Astrocyte of the cerebellum (primary cell): ENCODE measurements at regions of chr1 and their contacts with region 1.

Region 1: GRCh38 chr1:50295566-50295965 is 127.7 kb downstream of the DMRTA2 start:
- DNase-seq: no peak
- H3K4me3 ChIP-seq: no peak overlapping the region
- CTCF ChIP-seq: no peak

Region 2: DNA sequence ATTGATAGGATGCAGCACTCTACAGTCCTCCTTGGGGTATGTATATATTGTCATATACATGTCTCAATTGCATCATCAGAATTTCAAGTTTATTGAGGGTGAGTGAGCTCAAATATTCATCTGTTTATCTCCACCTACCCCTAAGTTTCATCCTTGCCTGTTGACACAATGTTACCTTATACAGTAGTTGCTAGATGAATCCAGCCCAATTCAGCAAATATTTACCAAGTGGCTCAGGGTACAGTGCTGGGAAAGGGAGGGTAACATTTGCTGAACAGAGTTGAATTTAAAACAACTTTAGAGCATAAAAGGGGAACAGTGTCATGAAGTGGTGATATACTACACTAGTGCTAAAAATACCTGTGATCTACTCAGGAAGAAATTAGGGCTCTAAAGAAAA is 172.5 kb before region 1 on chr1:
- in situ Hi-C with region 1: no loop called
- DNase-seq: no peak
- H3K4me3 ChIP-seq: no peak overlapping the region
- CTCF ChIP-seq: no peak

Region 3: DNA sequence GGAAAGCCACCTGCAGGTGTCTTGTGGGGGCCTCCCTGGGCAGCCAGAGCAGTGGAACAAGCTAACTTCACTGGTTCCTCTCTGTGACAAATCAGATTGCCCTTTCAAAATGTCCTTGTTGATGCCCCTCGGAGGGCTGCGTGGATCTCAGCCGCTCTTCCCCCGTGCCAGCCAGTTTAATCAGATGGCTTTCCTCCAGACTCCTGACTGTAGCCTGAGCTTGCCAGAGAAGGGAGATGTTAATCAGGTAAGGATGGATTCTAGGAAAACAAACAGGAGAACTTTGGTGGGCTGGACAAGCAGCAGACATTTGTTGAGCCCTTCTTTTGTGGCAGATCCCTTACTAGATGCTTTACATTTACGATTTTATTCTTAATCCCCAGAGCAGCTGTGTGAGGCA is 39.5 kb after region 1 on chr1:
- in situ Hi-C with region 1: loop called (anchors 5 kb)
- DNase-seq: no peak
- H3K4me3 ChIP-seq: no peak overlapping the region
- CTCF ChIP-seq: no peak